ENCODE measurements at regions of chr1 and their contacts with region 1.

Region 1: GRCh38 chr1:155208541-155209311 is at the start of gene MTX1:
- DNase-seq: peak; percentile 94
- ATAC-seq: peak; percentile 86
- H3K4me3 Mint-ChIP-seq: peak within 1 kb of the TSS; percentile 92
- H3K27ac Mint-ChIP-seq: peak within 1 kb of the TSS; percentile 89
- H3K4me1 Mint-ChIP-seq: peaks cover 29% of the 10 kb centered on the region
- H3K27me3 Mint-ChIP-seq: no peaks in the 10 kb centered on the region
- CTCF ChIP-seq: no peak
- total RNA-seq, gene MTX1: 59.2 to 61.0 TPM

Region 2: DNA sequence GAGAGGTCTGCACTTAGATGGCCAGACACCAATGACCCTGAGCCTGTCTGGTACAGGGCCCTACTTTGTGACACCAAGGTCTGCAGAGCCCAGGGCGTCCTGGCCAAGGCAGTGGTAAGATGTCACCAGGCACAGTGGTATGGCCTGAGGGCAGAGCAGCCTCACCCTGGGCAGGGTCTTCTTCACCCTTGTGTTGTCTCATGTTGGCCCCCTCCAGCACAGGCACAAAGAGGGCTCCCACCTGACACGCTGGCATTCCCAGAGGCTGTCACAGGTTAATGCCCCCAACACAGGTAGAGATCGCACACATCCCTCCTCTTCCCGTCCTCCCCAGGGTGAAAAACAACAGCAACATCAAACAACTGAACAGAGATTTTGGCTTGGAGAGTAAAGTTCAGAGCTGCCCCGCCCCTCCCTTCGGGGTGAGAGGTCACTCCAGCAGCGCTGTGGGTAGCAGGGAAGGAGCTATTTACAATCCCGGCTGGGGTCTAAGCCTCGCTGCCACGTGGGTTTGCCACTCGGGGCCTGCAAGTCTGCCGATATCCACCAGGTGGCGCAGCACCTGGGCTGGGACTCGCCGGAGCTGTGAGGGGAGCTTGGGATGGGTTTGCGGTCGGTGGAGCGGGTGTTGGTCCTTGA is 117.5 kb before region 1 on chr1:
- CTCF ChIA-PET with region 1: no interaction called
- POLR2A ChIA-PET with region 1: no interaction called
- intact Hi-C with region 1: no loop called
- DNase-seq: peak; percentile 86
- ATAC-seq: peak; percentile 88
- H3K4me3 Mint-ChIP-seq: peak overlapping the region; percentile 12
- H3K27ac Mint-ChIP-seq: no peak overlapping the region
- H3K4me1 Mint-ChIP-seq: peaks cover 2% of the 10 kb centered on the region
- H3K27me3 Mint-ChIP-seq: peaks cover 9% of the 10 kb centered on the region
- CTCF ChIP-seq: peak; percentile 99

Region 3: GRCh38 chr1:155227261-155228095 is 18.8 kb after region 1 on chr1:
- CTCF ChIA-PET with region 1: interaction called, 24 read pairs
- POLR2A ChIA-PET with region 1: interaction called, 24 read pairs
- intact Hi-C with region 1: loop called (anchors 2 kb)
- DNase-seq: peak; percentile 100
- ATAC-seq: peak; percentile 98
- H3K4me3 Mint-ChIP-seq: peak overlapping the region; percentile 91
- H3K27ac Mint-ChIP-seq: peak overlapping the region; percentile 99
- H3K4me1 Mint-ChIP-seq: peaks cover 37% of the 10 kb centered on the region
- H3K27me3 Mint-ChIP-seq: no peaks in the 10 kb centered on the region
- CTCF ChIP-seq: no peak

Region 4: DNA sequence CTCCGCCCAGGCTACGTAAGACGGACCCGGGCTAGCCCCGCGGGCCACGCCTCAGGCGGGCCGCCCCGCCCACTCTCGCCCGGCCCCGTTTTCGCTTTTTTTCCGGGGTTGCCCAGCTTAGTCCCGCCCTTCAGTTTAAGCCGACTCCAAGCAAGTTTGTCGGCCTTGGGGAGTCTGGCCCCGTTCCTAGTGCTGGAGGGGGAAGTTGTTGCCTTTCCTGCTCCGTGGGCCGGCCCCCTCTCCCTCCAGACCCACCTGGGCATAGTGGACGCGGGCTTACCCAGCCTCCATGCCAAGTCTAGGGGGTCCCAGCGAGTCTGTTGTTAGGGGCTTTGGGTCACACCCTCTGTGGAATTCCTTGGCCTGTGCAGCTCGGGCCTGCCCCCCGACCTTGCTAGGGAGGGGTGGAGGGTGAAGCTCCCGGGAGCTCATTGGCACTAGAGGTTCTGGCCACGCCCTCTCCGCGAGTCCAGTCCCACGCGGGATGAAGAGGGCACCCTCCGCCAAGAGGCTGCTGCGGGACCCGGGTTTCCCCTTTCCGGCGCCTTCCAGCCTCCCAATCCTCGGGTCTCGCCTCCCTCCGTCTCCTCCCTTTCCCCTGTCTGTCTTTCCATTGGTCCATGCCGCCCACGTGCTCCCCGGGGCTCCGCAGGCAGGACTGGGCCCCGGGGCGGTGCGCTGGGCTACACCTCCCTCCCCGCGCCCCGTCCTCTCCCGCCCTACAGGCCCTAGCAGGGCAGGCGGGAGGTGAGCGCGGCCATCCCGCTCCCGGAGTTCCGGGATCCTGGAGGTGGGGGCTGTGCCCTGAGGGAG is 115.3 kb after region 1 on chr1:
- CTCF ChIA-PET with region 1: interaction called, 14 read pairs
- POLR2A ChIA-PET with region 1: interaction called, 5 read pairs
- intact Hi-C with region 1: no loop called
- DNase-seq: peak; percentile 95
- ATAC-seq: peak; percentile 78
- H3K4me3 Mint-ChIP-seq: peak overlapping the region; percentile 81
- H3K27ac Mint-ChIP-seq: peak overlapping the region; percentile 75
- H3K4me1 Mint-ChIP-seq: peaks cover 42% of the 10 kb centered on the region
- H3K27me3 Mint-ChIP-seq: no peaks in the 10 kb centered on the region
- CTCF ChIP-seq: no peak

Measured in activated CD8-positive, alpha-beta T cell treated with anti-CD3 and anti-CD28 coated beads for 36 hours (primary cell).